Activated CD4-positive, alpha-beta memory T cell treated with anti-CD3 and anti-CD28 coated beads, Interleukin-2, amount 10 ng/mL, durations not matched to agents 7 days and 5 days (primary cell): ENCODE measurements at regions of chr22 and their contacts with region 1.

Region 1: DNA sequence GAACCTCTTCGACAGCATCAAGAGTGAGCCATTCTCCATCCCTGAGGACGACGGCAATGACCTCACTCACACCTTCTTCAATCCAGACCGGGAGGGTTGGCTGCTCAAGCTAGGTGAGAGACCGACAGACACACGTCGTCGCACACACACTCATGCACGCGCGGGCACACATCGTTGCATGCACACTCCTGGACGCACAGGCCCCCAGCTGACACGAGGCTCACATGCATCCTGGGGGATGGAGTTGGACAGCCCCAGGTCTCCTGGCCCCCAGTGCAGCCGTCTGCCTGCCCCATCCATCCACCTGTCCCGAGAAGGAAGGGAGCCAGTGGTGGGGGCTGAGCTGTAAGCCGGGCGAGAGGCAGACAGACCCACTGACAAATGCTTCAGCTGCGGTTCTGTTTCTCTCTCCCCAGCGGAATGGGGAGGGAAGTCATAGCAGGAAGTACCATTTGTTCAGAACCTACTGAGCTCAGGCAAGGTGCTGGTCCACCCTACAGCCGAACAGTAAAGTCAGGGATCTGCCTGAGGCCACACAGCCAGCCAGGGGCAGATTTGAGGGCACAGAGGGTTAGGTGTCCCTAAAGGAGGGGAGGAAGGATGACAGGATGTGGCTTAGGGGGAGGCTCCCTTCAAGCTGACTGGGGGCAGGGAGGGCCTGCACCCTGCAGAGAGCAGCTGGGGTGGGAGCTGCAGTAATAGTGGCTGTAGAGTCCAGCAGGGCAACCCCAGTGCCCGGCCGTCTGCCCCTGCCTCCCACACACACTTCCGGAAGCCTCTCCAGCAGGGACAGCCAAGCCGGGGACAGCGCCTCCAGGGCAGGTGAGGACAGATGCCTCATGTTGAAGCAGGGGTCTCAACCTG is 27.1 kb downstream of the CYTH4 start:
- DNase-seq: peak; percentile 80
- H3K4me3 Mint-ChIP-seq: peak overlapping the region; percentile 45
- H3K27ac Mint-ChIP-seq: peak overlapping the region; percentile 100
- H3K4me1 Mint-ChIP-seq: peaks cover 88% of the 10 kb centered on the region
- H3K27me3 Mint-ChIP-seq: no peaks in the 10 kb centered on the region

Region 2: GRCh38 chr22:37295213-37295886 is 14.1 kb before region 1 on chr22:
- CTCF ChIA-PET with region 1: no interaction called
- POLR2A ChIA-PET with region 1: interaction called, 28 read pairs
- DNase-seq: no peak
- H3K4me3 Mint-ChIP-seq: no peak overlapping the region
- H3K27ac Mint-ChIP-seq: peak overlapping the region; percentile 32
- H3K4me1 Mint-ChIP-seq: peaks cover 78% of the 10 kb centered on the region
- H3K27me3 Mint-ChIP-seq: no peaks in the 10 kb centered on the region

Region 3: DNA sequence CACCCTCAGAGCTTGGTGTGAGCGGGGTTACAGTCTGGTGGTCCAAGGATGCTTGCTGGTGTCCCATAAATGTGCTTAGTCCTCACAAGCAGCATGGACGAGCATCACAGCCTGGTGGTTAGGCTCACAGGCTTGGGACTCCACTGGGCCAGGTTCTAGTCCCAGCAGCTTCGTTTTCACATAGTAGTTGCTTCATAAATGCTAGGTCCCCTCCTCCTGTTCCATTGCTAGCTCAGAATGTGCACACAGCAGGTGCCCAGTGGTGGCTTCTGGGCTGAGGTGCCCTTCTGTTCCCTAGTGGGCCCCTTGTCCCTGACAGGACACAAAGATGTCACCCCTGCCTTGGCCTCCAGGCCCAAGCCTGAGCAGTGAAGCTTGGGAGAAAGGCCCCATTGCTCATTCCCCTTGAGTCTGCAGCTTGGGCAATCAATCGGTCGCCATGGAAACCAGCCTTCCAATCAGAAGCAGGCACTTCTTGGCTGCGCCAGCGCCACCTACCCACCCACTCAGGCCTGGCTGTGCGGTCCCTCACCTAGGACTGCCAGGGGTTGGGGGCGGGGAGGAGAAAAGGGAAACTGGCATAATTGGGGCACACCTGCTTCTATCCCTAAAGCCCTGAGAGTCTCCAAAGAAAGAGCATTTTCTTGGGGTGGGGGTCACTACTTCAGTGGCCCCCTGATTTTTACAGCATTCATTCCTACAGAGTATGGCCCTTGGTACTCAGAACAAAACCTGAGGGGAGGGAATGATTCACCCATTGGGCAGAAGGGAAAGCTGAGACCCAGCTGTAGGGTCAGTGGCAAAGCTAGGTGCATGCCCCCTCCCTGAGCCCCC is 21.0 kb after region 1 on chr22:
- CTCF ChIA-PET with region 1: no interaction called
- POLR2A ChIA-PET with region 1: no interaction called
- DNase-seq: peak; percentile 59
- H3K4me3 Mint-ChIP-seq: no peak overlapping the region
- H3K27ac Mint-ChIP-seq: no peak overlapping the region
- H3K4me1 Mint-ChIP-seq: peaks cover 9% of the 10 kb centered on the region
- H3K27me3 Mint-ChIP-seq: peaks cover 66% of the 10 kb centered on the region

Region 4: DNA sequence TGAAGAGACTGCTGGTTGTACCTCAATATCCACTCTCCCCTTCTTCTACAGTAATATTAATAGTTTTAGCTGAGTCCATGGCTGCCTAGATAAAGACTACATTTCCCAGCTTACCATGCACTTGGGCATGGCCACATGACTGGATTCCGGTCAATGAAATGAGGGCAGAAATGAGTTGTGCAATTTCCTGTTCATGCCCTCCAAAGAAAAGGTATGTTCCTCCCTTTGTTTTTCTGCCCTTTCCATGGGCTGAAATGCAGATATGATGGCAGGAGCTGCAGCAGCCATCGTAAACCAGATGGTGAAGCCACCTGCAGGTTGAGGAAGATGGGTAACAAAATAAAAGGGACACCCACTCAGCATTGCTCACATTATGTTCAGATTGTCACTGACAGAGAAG is 133.1 kb after region 1 on chr22:
- CTCF ChIA-PET with region 1: no interaction called
- POLR2A ChIA-PET with region 1: no interaction called
- DNase-seq: no peak
- H3K4me3 Mint-ChIP-seq: no peak overlapping the region
- H3K27ac Mint-ChIP-seq: no peak overlapping the region
- H3K4me1 Mint-ChIP-seq: peaks cover 15% of the 10 kb centered on the region
- H3K27me3 Mint-ChIP-seq: peaks cover 3% of the 10 kb centered on the region

Region 5: DNA sequence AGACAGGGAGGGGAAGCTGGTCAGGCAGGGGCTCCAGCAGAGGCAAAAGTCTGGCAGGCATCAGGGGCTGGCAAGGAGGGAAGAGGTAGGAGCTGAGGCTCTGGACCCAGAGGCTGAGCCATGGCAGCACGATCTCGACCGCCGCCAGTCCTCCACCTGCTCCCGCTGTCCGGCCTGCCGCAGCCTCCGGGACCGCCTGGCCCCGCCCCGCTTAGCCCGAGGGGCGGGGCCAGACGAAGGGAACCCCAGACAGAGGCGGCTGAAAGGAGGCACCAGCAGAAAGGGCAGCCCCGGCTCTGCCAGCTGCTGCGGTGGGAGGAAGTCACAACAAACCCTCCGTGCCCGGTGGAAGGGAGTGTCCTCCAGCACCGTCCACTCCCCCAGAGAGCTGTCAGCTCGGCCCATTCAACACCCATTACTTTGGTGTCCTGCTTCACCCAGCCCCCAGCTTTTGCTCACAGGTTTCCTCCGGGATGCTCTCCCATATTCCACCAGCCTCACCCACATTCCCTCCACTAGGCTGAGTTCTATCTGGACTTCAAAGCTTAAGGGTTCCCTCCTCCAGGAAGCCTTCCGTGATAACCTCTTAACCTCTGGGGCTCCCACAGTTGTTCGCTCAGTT is 176.9 kb after region 1 on chr22 and contains the start of gene MFNG:
- CTCF ChIA-PET with region 1: no interaction called
- POLR2A ChIA-PET with region 1: interaction called, 15 read pairs
- DNase-seq: peak; percentile 82
- H3K4me3 Mint-ChIP-seq: peak within 1 kb of the TSS; percentile 98
- H3K27ac Mint-ChIP-seq: peak within 1 kb of the TSS; percentile 94
- H3K4me1 Mint-ChIP-seq: peaks cover 56% of the 10 kb centered on the region
- H3K27me3 Mint-ChIP-seq: no peaks in the 10 kb centered on the region
- total RNA-seq, gene MFNG: 200 to 203 TPM